SK-N-SH (cell line): ENCODE measurements at regions of chr12 and their contacts with region 1.

Region 1: GRCh38 chr12:130474599-130475269 is 137.0 kb downstream of the PIWIL1 start:
- DNase-seq: no peak
- H3K4me3 ChIP-seq: no peak overlapping the region
- H3K27ac ChIP-seq: no peak overlapping the region; a peak in 1 of 4 replicates
- H3K4me1 ChIP-seq: peaks cover 0 to 31% of the 10 kb centered on the region in 2 experiments; a peak in 1 of 4 replicates
- H3K27me3 ChIP-seq: no peaks in the 10 kb centered on the region
- CTCF ChIP-seq: no peak
- EP300 ChIP-seq: no peak
- RAD21 ChIP-seq: no peak

Region 2: GRCh38 chr12:130456375-130457119 is 18.2 kb before region 1 on chr12:
- CTCF ChIA-PET with region 1: interaction called, 10 read pairs
- POLR2A ChIA-PET with region 1: no interaction called
- DNase-seq: no peak
- H3K4me3 ChIP-seq: no peak overlapping the region
- H3K27ac ChIP-seq: no peak overlapping the region; a peak in 1 of 4 replicates
- H3K4me1 ChIP-seq: peaks cover 0 to 15% of the 10 kb centered on the region in 2 experiments; a peak in 1 of 4 replicates
- H3K27me3 ChIP-seq: no peaks in the 10 kb centered on the region
- CTCF ChIP-seq: no peak
- EP300 ChIP-seq: no peak
- RAD21 ChIP-seq: no peak